ENCODE measurements at regions of chr6 and their contacts with region 1.

Region 1: DNA sequence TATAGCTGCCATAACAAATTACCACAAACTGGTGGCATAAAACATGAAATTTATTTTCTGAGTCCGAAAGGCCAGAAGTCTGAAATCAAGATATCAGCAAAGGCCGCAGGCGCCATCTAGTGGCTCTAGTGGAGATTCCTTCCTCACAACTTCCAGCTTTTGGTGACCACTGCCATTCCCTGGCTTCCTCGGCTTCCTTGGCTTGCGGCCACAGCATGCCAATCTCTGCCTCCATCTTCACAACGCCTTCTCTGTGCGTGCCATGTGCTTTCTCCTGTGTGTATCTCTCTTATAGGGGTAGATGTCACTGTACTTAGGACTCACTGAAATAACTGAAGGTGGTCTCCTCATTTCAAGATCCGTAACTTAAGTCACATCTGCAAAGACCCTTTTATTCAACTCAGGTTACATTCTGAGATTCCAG is 5.4 kb upstream of the PLAGL1 start:
- DNase-seq: peak; percentile 80
- ATAC-seq: no peak
- H3K4me3 Mint-ChIP-seq: no peak overlapping the region
- H3K27ac Mint-ChIP-seq: no peak overlapping the region
- H3K4me1 Mint-ChIP-seq: no peaks in the 10 kb centered on the region
- H3K27me3 Mint-ChIP-seq: peaks cover 14% of the 10 kb centered on the region

Region 2: DNA sequence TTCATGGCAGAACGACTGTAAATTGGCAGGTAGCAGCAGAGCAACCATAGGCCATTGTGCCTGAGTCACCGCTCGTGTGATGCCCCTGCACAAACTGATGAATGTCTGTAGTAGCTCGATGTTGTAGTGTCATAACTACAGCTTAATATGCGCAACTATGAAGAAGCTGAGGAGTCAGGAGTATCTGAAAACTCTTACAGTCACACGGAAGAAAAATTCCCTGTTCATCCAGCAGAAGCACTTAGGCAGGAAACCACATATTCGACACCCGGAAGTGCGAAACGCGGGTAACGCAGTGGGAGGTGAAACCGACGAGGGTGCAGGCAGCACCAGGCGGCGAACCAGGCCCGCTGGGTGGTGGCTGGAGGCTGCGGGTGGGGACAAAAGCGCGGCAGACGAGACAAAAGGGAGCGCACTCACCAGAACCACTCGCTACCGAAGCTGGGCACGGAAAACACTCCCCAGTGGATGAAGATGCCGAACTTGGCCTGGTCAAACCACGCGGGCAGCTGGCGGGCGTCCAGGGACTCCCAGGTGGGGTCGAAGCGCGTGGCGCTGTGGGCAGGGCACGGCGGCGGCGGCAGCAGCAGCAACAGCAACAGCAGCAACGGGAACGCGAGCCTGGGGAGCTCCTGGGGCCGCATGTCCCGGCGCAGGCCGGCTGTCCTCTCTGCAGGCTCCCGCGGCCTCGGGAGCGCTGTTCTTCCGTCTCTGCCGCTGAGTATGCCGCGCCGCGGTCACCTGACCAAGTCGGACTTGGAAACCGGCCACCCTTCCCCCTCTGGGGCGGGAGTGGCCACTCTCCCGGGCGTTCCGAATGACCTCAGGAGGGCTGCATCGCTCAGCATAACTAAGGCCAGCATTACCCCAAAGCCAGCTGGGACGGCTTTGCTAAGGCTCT is 502.3 kb before region 1 on chr6 and contains the start of gene FUCA2:
- CTCF ChIA-PET with region 1: interaction called, 8 read pairs
- POLR2A ChIA-PET with region 1: no interaction called
- intact Hi-C with region 1: loop called in 1 of 2 experiments (anchors 5 kb)
- DNase-seq: peak; percentile 80
- ATAC-seq: peak; percentile 85
- H3K4me3 Mint-ChIP-seq: peak within 1 kb of the TSS; percentile 84
- H3K27ac Mint-ChIP-seq: peak within 1 kb of the TSS; percentile 91
- H3K4me1 Mint-ChIP-seq: peaks cover 22% of the 10 kb centered on the region
- H3K27me3 Mint-ChIP-seq: no peaks in the 10 kb centered on the region
- total RNA-seq, gene FUCA2: 6.7 to 7.8 TPM

Region 3: GRCh38 chr6:143575440-143575839 is 438.1 kb before region 1 on chr6:
- CTCF ChIA-PET with region 1: interaction called, 78 read pairs
- POLR2A ChIA-PET with region 1: no interaction called
- intact Hi-C with region 1: loop called (anchors 1 kb)
- DNase-seq: peak; percentile 58
- ATAC-seq: peak; percentile 93
- H3K4me3 Mint-ChIP-seq: no peak overlapping the region
- H3K27ac Mint-ChIP-seq: no peak overlapping the region
- H3K4me1 Mint-ChIP-seq: no peaks in the 10 kb centered on the region
- H3K27me3 Mint-ChIP-seq: no peaks in the 10 kb centered on the region

Region 4: GRCh38 chr6:143940011-143940597 is 73.4 kb before region 1 on chr6:
- CTCF ChIA-PET with region 1: interaction called, 125 read pairs
- POLR2A ChIA-PET with region 1: no interaction called
- intact Hi-C with region 1: loop called (anchors 1 kb)
- DNase-seq: peak; percentile 75
- ATAC-seq: peak; percentile 93
- H3K4me3 Mint-ChIP-seq: no peak overlapping the region
- H3K27ac Mint-ChIP-seq: no peak overlapping the region
- H3K4me1 Mint-ChIP-seq: peaks cover 3% of the 10 kb centered on the region
- H3K27me3 Mint-ChIP-seq: no peaks in the 10 kb centered on the region

Region 5: DNA sequence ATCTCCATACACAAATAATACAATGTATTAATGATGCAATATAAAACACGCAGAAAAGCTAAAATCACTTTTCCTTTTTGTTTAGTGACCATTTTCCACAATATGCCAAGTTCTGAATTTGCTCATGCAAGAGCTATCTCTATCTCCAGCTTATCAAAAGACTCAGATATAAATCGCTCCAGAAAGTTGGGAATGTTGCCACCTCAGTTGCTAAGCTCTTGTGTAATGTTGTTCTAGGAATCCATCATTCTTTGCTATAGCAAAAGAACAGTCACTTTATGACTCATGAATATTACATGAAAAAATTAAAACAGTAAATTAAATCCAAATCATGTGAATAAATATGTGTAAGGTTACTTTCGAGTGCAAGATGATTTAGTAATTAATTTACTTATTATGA is 14.1 kb before region 1 on chr6:
- CTCF ChIA-PET with region 1: interaction called, 10 read pairs
- POLR2A ChIA-PET with region 1: no interaction called
- intact Hi-C with region 1: no loop called
- DNase-seq: no peak
- ATAC-seq: no peak
- H3K4me3 Mint-ChIP-seq: no peak overlapping the region
- H3K27ac Mint-ChIP-seq: no peak overlapping the region
- H3K4me1 Mint-ChIP-seq: no peaks in the 10 kb centered on the region
- H3K27me3 Mint-ChIP-seq: peaks cover 4% of the 10 kb centered on the region

Region 6: GRCh38 chr6:144607998-144608735 is 594.7 kb after region 1 on chr6:
- CTCF ChIA-PET with region 1: no interaction called
- POLR2A ChIA-PET with region 1: no interaction called
- intact Hi-C with region 1: no loop called
- DNase-seq: no peak
- ATAC-seq: no peak
- H3K4me3 Mint-ChIP-seq: no peak overlapping the region
- H3K27ac Mint-ChIP-seq: no peak overlapping the region
- H3K4me1 Mint-ChIP-seq: peaks cover 30% of the 10 kb centered on the region
- H3K27me3 Mint-ChIP-seq: no peaks in the 10 kb centered on the region